Prostate gland (tissue), 2 donors: ENCODE measurements at regions of chr2 and their contacts with region 1.

Region 1: DNA sequence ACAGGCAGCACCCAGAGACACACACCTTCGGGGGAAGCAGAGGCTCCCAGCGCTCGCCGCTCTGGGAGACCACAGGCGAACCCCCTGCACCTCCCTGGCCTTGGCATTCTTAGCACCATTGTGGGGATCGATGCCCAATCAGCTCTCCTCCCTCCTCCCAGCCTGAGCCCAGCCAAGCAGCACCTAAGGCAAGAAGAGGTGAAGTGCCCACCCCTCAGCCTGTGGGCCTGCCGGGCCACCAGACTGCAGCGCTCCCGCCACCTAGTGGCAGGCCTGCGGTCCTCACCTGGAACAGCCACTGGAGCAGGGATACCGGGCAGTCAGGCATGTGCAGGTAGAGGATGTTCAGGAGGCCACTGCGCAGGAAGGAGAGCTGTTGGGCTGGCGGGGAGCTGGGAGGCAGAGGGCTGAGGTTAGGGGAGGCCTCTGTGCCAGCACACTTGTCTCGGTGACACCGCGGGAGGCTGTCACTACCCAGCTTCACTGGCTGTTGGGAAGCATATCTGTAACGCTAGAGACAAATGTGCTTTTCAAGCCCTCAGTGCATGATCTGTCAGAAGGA is 35.2 kb downstream of the FAM178B start:
- DNase-seq: peak; percentile 85
- H3K4me3 ChIP-seq: no peak overlapping the region
- H3K27ac ChIP-seq: peak overlapping the region; percentile 7 to 15
- H3K4me1 ChIP-seq: peaks cover 7% of the 10 kb centered on the region
- H3K27me3 ChIP-seq: no peaks in the 10 kb centered on the region
- CTCF ChIP-seq: peak; percentile 91 to 97 (median 94)
- POLR2A ChIP-seq: no peak

Region 2: GRCh38 chr2:96407041-96407918 is 543.9 kb before region 1 on chr2:
- intact Hi-C with region 1: no loop called
- DNase-seq: peak; percentile 91
- H3K4me3 ChIP-seq: no peak overlapping the region
- H3K27ac ChIP-seq: peak overlapping the region; percentile 30 to 33
- H3K4me1 ChIP-seq: no peaks in the 10 kb centered on the region
- H3K27me3 ChIP-seq: no peaks in the 10 kb centered on the region
- CTCF ChIP-seq: peak; percentile 68 to 91 (median 86)
- POLR2A ChIP-seq: no peak

Region 3: GRCh38 chr2:96638144-96639121 is 312.7 kb before region 1 on chr2 and contains the start of gene KANSL3:
- intact Hi-C with region 1: loop called (anchors 5 kb)
- DNase-seq: peak; percentile 85
- H3K4me3 ChIP-seq: peak within 1 kb of the TSS; percentile 82 to 89
- H3K27ac ChIP-seq: peak within 1 kb of the TSS; percentile 92 to 96
- H3K4me1 ChIP-seq: no peaks in the 10 kb centered on the region
- H3K27me3 ChIP-seq: no peaks in the 10 kb centered on the region
- CTCF ChIP-seq: peak in 2 of 4 experiments; percentile 19 to 39
- POLR2A ChIP-seq: peak; percentile 91
- total RNA-seq, gene KANSL3: 41.3 to 70.0 TPM

Region 4: DNA sequence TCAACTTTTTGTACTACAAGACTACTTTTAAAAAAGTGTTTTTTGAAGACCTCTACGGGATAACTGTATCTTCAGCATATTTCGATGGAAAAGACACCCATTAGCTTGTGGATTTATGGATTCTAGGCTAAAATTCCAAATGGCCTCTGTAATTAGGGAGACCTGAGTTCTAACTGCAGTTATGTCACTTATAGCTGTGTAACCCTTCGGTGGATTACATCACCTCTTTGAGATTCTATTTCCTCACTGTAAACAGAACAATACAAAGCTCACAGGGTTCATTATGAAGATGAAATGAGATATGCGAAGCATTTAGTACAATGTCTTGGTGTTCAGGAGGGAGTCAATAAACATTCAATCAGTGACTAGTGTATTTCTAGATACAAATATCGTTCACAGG is 235.5 kb before region 1 on chr2:
- intact Hi-C with region 1: no loop called
- DNase-seq: no peak
- H3K4me3 ChIP-seq: no peak overlapping the region
- H3K27ac ChIP-seq: no peak overlapping the region
- H3K4me1 ChIP-seq: no peaks in the 10 kb centered on the region
- H3K27me3 ChIP-seq: no peaks in the 10 kb centered on the region
- CTCF ChIP-seq: no peak
- POLR2A ChIP-seq: no peak

Region 5: GRCh38 chr2:96856776-96857673 is 94.1 kb before region 1 on chr2:
- intact Hi-C with region 1: loop called (anchors 1 kb)
- DNase-seq: no peak
- H3K4me3 ChIP-seq: peak overlapping the region; percentile 73 to 76
- H3K27ac ChIP-seq: peak overlapping the region; percentile 84 to 85
- H3K4me1 ChIP-seq: peaks cover 16% of the 10 kb centered on the region
- H3K27me3 ChIP-seq: no peaks in the 10 kb centered on the region
- CTCF ChIP-seq: no peak
- POLR2A ChIP-seq: no peak

Region 6: GRCh38 chr2:96907115-96908041 is 43.8 kb before region 1 on chr2:
- intact Hi-C with region 1: loop called (anchors 2 kb)
- DNase-seq: peak; percentile 84
- H3K4me3 ChIP-seq: no peak overlapping the region
- H3K27ac ChIP-seq: peak overlapping the region; percentile 84 to 88
- H3K4me1 ChIP-seq: peaks cover 16% of the 10 kb centered on the region
- H3K27me3 ChIP-seq: no peaks in the 10 kb centered on the region
- CTCF ChIP-seq: peak in 2 of 4 experiments; percentile 20 to 26
- POLR2A ChIP-seq: peak; percentile 20